HepG2 (cell line): ENCODE measurements at regions of chr11 and their contacts with region 1.

Region 1: GRCh38 chr11:83156150-83156995 is 558 bp upstream of the PCF11 start:
- DNase-seq: peak; percentile 100
- ATAC-seq: peak; percentile 96
- H3K4me3 ChIP-seq: peak overlapping the region; percentile 62 to 75 (median 66)
- H3K27ac ChIP-seq: peak overlapping the region; percentile 73
- H3K4me1 ChIP-seq: peaks cover 29% of the 10 kb centered on the region
- H3K27me3 ChIP-seq: no peaks in the 10 kb centered on the region; a peak in 2 of 5 replicates
- CTCF ChIP-seq: no peak
- EP300 ChIP-seq: 0 out of 4 replicates have a peak, but pooled peaks of 1 of the 2 experiments have one; percentile 13
- POLR2A ChIP-seq: peak in 1 of 2 experiments; percentile 64; a peak in 2 of 4 replicates
- RAD21 ChIP-seq: no peak

Region 2: GRCh38 chr11:82900277-82901164 is 255.9 kb before region 1 on chr11 and contains the start of gene PRCP:
- CTCF ChIA-PET with region 1: no interaction called
- POLR2A ChIA-PET with region 1: interaction called, 27 read pairs
- in situ Hi-C with region 1: loop called (anchors 10 kb)
- intact Hi-C with region 1: loop called (anchors 1 kb)
- DNase-seq: peak; percentile 81
- ATAC-seq: peak; percentile 95
- H3K4me3 ChIP-seq: peak within 1 kb of the TSS; percentile 87 to 96 (median 94)
- H3K27ac ChIP-seq: peak within 1 kb of the TSS; percentile 82
- H3K4me1 ChIP-seq: peaks cover 34% of the 10 kb centered on the region
- H3K27me3 ChIP-seq: no peaks in the 10 kb centered on the region; a peak in 1 of 5 replicates
- CTCF ChIP-seq: peak; percentile 42; the same call in 1 of the 2 replicates
- EP300 ChIP-seq: no peak
- POLR2A ChIP-seq: peak; percentile 82 to 90
- RAD21 ChIP-seq: peak; percentile 44; the same call in 1 of the 2 replicates
- total RNA-seq, gene PRCP: 49.9 and 84.2 TPM in 2 replicates

Region 3: DNA sequence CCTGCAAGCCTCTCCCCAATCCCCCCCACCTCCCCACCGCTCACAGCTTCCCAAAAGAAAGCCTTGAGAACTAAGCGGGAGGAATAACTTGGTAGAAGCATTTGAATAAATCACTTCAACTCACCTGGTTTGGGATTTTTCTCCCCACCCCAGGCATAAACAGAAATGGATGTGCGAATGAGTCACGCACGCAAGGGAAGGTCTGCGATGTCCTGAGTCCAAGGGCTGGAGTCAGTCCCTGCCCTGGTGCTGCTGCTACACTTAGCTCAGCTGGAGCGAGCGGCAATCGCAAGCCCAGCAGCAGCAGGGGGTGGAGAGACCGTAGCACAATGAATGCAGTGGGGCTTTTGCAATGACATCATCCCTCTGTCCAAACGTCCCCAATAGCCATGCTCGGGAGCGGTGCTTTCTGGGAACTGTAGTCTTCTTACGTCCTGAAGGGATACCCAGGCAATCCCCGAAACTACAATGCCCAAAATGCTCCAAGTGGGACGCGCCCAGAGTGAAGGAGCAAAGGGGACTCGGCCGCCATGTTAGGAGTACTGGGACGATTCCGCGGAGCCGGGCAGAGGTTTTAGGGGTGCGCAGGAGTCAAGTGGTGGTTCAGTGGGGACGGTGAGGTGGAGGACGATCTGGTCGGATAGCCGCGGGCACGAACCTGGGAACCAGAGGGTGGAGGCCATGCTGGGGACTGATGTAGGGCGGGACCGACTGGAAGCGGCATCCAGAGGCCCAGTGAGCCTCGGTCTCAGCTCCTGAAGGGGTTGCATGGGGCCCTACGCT is 84.6 kb before region 1 on chr11 and contains the start of gene RAB30:
- CTCF ChIA-PET with region 1: no interaction called
- POLR2A ChIA-PET with region 1: interaction called, 67 read pairs
- in situ Hi-C with region 1: no loop called
- intact Hi-C with region 1: loop called (anchors 1 kb)
- DNase-seq: peak; percentile 100
- ATAC-seq: peak; percentile 98
- H3K4me3 ChIP-seq: peak within 1 kb of the TSS; percentile 82 to 92 (median 89)
- H3K27ac ChIP-seq: peak within 1 kb of the TSS; percentile 88
- H3K4me1 ChIP-seq: peaks cover 60% of the 10 kb centered on the region
- H3K27me3 ChIP-seq: no peaks in the 10 kb centered on the region; a peak in 1 of 5 replicates
- CTCF ChIP-seq: peak; percentile 20; the same call in 1 of the 2 replicates
- EP300 ChIP-seq: peak; percentile 43 to 59; a peak in 3 of 4 replicates
- POLR2A ChIP-seq: peak; percentile 88 to 91
- RAD21 ChIP-seq: peak; percentile 6; the same call in 1 of the 2 replicates
- total RNA-seq, gene RAB30: 5.0 and 8.8 TPM in 2 replicates

Region 4: GRCh38 chr11:83092488-83093384 is 63.6 kb before region 1 on chr11:
- CTCF ChIA-PET with region 1: no interaction called
- POLR2A ChIA-PET with region 1: interaction called, 37 read pairs
- in situ Hi-C with region 1: loop called (anchors 5 kb)
- intact Hi-C with region 1: loop called (anchors 2 kb)
- DNase-seq: peak; percentile 98
- ATAC-seq: peak; percentile 97
- H3K4me3 ChIP-seq: peak overlapping the region in 2 of 3 experiments; percentile 0 to 33; a peak in 1 of 6 replicates
- H3K27ac ChIP-seq: peak overlapping the region; percentile 90
- H3K4me1 ChIP-seq: peaks cover 32% of the 10 kb centered on the region
- H3K27me3 ChIP-seq: no peaks in the 10 kb centered on the region
- CTCF ChIP-seq: no peak
- EP300 ChIP-seq: peak in 1 of 2 experiments; percentile 91; a peak in 2 of 4 replicates
- POLR2A ChIP-seq: peak; percentile 31 to 41; a peak in 2 of 4 replicates
- RAD21 ChIP-seq: peak; percentile 40; the same call in 1 of the 2 replicates

Region 5: GRCh38 chr11:83115551-83115950 is 40.8 kb before region 1 on chr11:
- CTCF ChIA-PET with region 1: no interaction called
- POLR2A ChIA-PET with region 1: interaction called, 13 read pairs
- in situ Hi-C with region 1: no loop called
- intact Hi-C with region 1: no loop called
- DNase-seq: peak; percentile 66
- ATAC-seq: peak; percentile 97
- H3K4me3 ChIP-seq: peak overlapping the region; percentile 18 to 51 (median 47); a peak in 5 of 6 replicates
- H3K27ac ChIP-seq: peak overlapping the region; percentile 27
- H3K4me1 ChIP-seq: peaks cover 52% of the 10 kb centered on the region
- H3K27me3 ChIP-seq: no peaks in the 10 kb centered on the region
- CTCF ChIP-seq: peak; percentile 55
- EP300 ChIP-seq: no peak
- POLR2A ChIP-seq: no peak
- RAD21 ChIP-seq: no peak

Region 6: DNA sequence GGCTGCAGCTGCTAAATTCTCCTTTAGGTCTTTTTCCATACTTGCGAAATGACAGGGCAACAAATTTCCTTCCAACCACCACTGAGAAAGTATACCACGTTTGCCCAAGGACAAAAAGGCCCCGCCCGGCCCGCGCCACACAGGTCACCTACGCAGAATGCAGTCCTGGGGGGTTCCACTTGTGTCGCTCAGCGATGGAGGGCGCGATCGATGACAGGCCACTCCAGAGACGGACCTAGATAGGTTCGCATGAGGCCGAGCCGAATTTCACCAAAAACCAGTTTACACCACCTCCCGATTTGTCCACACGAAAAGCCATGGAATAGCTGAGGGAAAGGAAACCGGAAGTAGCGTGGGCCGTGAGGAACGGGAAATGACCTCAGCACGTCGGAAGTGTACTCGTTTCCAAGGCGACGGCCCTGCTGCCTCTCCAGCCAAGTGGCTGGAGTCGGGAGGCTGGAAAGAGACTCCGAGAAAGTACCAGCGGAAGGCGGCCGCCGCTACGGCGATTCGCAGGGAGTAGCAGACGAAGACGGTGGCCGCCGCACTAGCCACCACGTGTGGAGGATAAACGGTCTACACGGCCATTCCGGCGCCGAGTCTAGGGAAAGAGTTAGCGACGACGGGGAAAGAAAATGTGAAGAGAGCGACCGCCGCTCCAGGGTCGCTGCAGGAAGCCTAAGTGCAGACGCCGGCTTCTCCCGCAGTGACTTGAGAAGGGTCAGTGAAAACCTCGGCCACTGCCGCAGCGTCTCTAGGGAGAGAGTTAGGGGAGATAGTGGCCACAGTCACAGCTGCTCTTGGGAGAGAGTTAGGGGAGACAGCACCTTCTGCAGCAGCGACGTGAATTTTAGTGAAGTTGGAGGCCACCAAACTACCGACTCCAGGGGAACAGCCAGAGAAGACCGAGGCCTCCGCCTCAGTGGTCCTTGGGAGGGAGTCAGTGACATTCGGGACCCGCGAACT is 37.2 kb after region 1 on chr11 and contains the start of gene ANKRD42:
- CTCF ChIA-PET with region 1: no interaction called
- POLR2A ChIA-PET with region 1: interaction called, 11 read pairs
- in situ Hi-C with region 1: no loop called
- intact Hi-C with region 1: no loop called
- DNase-seq: peak; percentile 93
- ATAC-seq: peak; percentile 96
- H3K4me3 ChIP-seq: peak within 1 kb of the TSS; percentile 88 to 98 (median 90)
- H3K27ac ChIP-seq: peak within 1 kb of the TSS; percentile 86
- H3K4me1 ChIP-seq: peaks cover 36% of the 10 kb centered on the region
- H3K27me3 ChIP-seq: no peaks in the 10 kb centered on the region; a peak in 1 of 5 replicates
- CTCF ChIP-seq: no peak
- EP300 ChIP-seq: 0 out of 4 replicates have a peak, but pooled peaks of 1 of the 2 experiments have one; percentile 6
- POLR2A ChIP-seq: peak; percentile 78 to 80; a peak in 3 of 4 replicates
- RAD21 ChIP-seq: no peak
- total RNA-seq, gene ANKRD42: 3.7 and 3.8 TPM in 2 replicates